ENCODE measurements at regions of chr14 and their contacts with region 1.

Region 1: DNA sequence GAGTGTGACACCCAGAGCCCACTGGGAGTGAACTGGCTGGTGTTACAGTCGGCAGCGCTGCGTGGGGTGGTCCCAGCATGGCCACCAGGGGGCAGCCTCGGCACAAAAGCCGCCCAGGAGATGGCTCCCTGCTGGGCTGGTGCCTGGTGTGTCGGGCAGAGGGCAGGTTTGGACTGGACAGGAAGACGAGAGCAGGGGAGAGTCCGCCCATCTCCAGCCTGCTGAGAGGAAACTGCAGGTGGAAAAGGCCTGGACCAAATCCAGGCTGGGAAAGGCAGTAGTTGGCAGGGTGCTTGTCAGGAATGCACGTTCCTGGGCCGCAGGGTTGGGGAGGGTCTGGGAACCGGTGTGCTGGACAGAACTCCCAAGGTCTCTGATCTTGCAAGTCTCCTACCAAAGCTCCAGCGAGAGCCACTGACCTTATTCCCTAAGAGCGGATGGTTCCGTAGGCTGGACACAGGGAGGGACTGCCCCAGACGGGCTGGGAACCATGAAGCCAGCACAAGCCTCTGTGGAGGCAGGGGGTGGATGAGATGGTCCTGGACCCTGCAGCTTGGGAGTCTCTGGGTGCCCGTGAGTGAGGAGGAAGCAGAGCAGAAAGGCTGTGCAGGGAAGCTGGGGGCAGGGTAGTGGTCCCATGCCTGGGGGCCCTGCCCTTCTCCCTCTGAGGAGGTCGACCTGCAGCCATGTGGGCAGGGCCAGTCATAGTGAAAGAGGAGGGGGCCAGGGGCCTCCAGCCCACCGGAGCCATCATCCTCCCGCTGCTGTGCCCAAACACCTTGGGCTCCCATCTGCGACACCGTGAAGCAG is 1.8 kb downstream of the AHNAK2 start:
- DNase-seq: peak; percentile 91
- H3K4me3 ChIP-seq: no peak overlapping the region
- H3K27ac ChIP-seq: no peak overlapping the region
- H3K4me1 ChIP-seq: peaks cover 40% of the 10 kb centered on the region
- H3K27me3 ChIP-seq: peaks cover 22% of the 10 kb centered on the region
- CTCF ChIP-seq: peak; percentile 87

Region 2: DNA sequence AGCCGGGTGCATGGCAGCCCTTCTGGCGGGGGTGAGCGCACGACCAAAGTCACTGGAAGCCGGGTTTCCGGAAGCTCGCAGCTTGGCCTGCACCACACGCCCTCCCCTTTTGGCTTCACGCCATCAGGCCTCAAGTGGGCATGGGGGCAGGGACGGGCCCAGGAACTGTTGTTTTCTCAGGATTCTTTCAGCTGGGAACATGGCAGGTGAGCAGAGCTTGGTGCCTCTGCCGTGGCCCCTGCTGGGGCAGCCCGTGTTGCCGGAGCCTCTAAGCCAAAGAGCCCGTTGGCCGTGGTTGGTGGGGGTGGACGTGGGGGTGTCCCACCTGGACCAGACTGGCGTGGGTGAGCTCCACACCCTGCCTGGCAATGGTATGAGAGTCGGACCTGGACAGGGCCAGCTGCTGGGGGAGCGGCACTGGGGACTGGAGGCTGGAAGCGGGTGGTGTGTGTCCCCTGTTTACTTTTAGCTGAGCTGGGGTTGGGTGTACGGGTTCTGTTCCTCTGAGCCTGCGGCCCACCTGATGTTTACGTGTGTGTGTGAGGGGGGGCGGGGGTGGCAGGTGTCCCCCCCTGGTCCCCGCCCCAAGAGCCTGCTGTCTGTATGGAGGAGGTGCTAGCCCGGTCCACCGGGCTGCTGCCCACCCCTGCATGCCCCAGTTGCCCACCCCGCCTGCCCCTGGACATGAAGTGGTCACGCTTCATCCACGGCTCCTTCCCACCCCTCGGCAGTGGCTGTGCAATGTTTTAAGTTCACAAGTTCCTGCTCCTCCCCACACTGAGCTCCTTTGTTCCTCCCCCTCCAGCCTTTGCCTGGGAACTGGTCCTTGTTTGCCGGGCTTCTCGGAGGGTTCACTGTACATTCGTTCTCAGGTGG is 80.4 kb before region 1 on chr14:
- intact Hi-C with region 1: no loop called
- DNase-seq: peak; percentile 18
- H3K4me3 ChIP-seq: no peak overlapping the region
- H3K27ac ChIP-seq: no peak overlapping the region
- H3K4me1 ChIP-seq: no peaks in the 10 kb centered on the region
- H3K27me3 ChIP-seq: no peaks in the 10 kb centered on the region
- CTCF ChIP-seq: no peak

Region 3: GRCh38 chr14:105019861-105020814 is 43.7 kb after region 1 on chr14:
- intact Hi-C with region 1: loop called (anchors 5 kb)
- DNase-seq: peak; percentile 37
- H3K4me3 ChIP-seq: peak overlapping the region; percentile 99
- H3K27ac ChIP-seq: peak overlapping the region; percentile 81
- H3K4me1 ChIP-seq: peaks cover 23% of the 10 kb centered on the region
- H3K27me3 ChIP-seq: no peaks in the 10 kb centered on the region
- CTCF ChIP-seq: no peak

Region 4: DNA sequence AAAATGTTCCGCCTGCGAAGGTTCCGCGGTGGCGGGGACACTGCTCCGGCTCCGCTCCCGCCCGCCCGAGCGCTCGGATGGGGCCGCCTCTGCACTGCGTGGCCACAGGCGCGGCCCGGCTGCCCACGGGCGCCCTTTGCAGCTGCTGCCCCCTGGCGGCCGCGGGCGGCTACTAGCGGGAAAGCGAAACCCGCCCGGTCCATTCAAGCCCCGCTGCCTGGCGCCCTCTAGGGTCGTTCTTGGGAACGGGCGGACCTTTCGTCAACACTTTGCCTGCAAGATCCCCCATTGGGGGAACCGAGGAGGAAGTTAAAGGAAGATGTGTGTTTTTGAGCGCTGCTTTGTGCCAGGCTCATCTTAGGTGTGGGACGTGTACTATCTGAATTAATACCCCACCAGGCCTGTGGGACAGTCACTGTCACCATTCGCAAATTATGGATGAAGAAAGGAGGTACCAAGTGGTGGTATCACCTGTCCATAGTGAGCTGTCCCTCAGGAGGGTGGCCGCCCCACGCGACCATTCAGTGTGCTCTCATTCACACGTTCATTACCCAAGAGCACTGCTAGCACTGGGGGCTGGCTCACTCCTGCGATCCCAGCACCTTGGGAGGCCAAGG is 69.4 kb after region 1 on chr14:
- intact Hi-C with region 1: loop called (anchors 2 kb)
- DNase-seq: peak; percentile 93
- H3K4me3 ChIP-seq: no peak overlapping the region
- H3K27ac ChIP-seq: no peak overlapping the region
- H3K4me1 ChIP-seq: no peaks in the 10 kb centered on the region
- H3K27me3 ChIP-seq: no peaks in the 10 kb centered on the region
- CTCF ChIP-seq: peak; percentile 100

Measured in colonic mucosa (tissue), 4 donors.